Cardiac septum (tissue), 1 donor: ENCODE measurements at regions of chr15 and their contacts with region 1.

Region 1: GRCh38 chr15:77993374-77993911 is 84.1 kb downstream of the TBC1D2B start:
- DNase-seq: no peak

Region 2: DNA sequence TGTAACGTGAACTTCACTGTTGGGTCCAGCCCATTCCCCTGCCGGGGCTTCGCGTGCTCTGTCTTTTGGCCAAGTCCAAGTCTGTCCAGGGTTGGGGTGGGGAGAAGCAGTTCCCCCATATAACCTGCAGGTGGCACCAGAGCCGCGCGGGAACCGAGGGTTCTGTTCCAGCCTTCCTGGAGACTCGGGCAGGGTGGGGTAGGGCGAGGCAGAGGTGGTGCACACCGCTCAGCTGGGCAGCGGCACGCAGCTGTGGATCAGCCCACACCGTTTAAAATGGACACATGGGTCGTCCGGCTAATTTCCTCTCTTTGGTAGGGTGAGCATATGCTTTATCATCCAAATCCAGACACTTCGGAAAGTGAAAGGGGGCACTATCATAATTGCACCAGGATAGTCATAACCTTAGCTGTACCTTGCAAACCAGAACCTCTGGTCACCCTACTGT is 34.0 kb before region 1 on chr15:
- intact Hi-C with region 1: no loop called
- DNase-seq: peak; percentile 92

Region 3: DNA sequence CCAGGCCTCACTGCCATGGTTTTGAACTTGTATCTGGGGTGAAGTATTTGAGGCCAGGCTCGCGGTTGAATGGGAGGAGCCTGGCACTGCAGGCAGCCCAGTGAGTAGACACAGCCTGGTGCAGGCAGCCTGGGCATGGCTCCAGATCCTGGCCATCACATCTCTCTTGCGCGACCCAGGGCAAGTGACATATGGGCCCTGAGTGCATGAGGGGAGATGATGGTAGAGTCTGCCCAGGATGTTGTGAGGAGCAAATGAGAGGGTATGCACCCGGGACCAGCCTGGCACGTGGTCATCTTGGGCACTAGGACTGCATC is 19.4 kb before region 1 on chr15:
- intact Hi-C with region 1: loop called (anchors 2 kb)
- DNase-seq: no peak

Region 4: GRCh38 chr15:78044407-78045155 is 51.1 kb after region 1 on chr15:
- intact Hi-C with region 1: no loop called
- DNase-seq: no peak

Region 5: DNA sequence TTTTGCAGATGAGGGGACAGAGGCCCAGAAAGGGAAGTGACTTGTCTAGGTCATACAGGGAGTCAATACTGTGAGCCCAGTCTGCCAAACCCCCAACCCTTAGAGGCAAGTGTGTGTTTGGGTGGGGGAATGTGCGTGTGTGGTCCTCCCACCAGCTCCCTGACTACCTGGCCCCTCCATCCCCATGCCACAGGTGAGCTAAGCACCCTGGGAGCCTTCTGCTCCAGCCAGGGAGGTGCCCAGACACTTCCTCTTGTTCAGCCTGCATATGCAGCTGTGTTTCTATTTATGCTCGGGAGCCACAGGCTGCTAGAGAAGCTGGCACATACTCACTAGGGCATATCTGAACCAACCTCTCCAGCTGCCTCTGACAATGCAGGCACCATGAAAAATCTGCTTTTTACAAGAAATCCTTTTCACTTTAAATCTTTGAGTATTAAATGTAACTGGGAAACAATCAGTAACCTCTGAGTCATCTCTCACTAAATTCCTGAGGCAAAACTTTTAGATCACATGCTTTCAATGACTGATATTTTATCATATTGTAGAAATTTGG is 63.3 kb after region 1 on chr15:
- intact Hi-C with region 1: loop called (anchors 5 kb)
- DNase-seq: no peak